Activated CD8-positive, alpha-beta T cell treated with anti-CD3 and anti-CD28 coated beads, Interleukin-2, amount 10 ng/mL, durations not matched to agents 7 days and 5 days (primary cell): ENCODE measurements at regions of chr1 and their contacts with region 1.

Region 1: DNA sequence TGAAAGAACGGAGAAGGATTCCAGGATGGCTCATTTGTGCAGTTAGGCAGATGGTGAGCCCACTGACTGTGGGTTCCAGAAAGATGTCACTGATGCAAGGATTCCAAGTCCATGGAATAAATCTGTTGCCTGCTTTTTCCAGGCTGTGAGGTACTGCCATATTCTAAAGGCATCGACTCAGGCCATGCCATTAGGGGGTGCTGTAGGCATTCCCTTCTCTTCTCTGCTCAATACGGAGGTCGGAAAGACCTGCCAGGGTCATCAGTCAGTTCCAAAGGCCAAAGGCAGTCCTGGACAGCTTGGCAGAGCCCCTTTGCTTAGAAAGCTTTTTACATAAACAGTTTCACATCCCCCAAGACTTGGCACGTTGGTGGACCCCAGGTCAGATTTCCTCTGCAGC is 31.7 kb upstream of the TMEM125 start:
- DNase-seq: peak; percentile 63
- ATAC-seq: no peak
- H3K4me3 Mint-ChIP-seq: no peak overlapping the region
- H3K27ac Mint-ChIP-seq: no peak overlapping the region
- H3K4me1 Mint-ChIP-seq: peaks cover 10% of the 10 kb centered on the region
- H3K27me3 Mint-ChIP-seq: peaks cover 4% of the 10 kb centered on the region

Region 2: GRCh38 chr1:43073490-43074230 is 164.4 kb before region 1 on chr1:
- CTCF ChIA-PET with region 1: no interaction called
- POLR2A ChIA-PET with region 1: no interaction called
- DNase-seq: peak; percentile 82
- ATAC-seq: peak; percentile 86
- H3K4me3 Mint-ChIP-seq: no peak overlapping the region
- H3K27ac Mint-ChIP-seq: peak overlapping the region; percentile 17
- H3K4me1 Mint-ChIP-seq: peaks cover 6% of the 10 kb centered on the region
- H3K27me3 Mint-ChIP-seq: peaks cover 2% of the 10 kb centered on the region

Region 3: GRCh38 chr1:43147553-43148319 is 90.3 kb before region 1 on chr1:
- CTCF ChIA-PET with region 1: no interaction called
- POLR2A ChIA-PET with region 1: no interaction called
- DNase-seq: peak; percentile 44
- ATAC-seq: peak; percentile 78
- H3K4me3 Mint-ChIP-seq: no peak overlapping the region
- H3K27ac Mint-ChIP-seq: no peak overlapping the region
- H3K4me1 Mint-ChIP-seq: peaks cover 2% of the 10 kb centered on the region
- H3K27me3 Mint-ChIP-seq: peaks cover 55% of the 10 kb centered on the region

Region 4: DNA sequence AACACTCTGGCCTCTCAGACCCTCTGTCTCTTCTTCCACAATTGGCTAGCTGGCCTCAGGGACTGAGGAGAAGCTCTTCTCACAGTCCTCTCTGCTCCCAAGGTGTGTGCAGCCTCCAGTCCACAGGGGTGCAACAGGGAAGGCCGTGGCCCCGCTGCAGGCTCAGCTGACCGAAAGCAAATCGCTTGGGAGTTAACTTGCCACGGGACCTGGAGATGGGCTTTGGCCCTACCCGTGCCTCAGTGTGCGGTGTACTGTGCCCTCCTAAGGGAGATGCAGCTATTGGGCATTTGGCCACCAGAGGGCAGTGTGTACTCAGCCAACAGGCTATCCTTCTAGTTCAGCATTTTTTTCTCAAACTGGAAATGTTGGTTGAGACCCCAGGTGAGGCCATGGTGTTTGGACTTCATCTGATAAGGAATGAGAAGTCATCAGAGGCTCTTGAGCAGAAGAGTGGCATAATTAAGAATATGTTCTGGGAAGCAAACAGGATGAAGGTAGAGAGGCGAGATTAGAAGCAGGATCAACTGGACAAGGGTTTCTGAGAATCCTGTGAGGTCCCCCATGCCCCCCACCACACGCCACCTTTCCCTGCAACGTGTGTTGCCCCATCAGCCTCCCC is 10.8 kb before region 1 on chr1:
- CTCF ChIA-PET with region 1: interaction called, 13 read pairs
- POLR2A ChIA-PET with region 1: no interaction called
- DNase-seq: peak; percentile 90
- ATAC-seq: peak; percentile 87
- H3K4me3 Mint-ChIP-seq: no peak overlapping the region
- H3K27ac Mint-ChIP-seq: no peak overlapping the region
- H3K4me1 Mint-ChIP-seq: no peaks in the 10 kb centered on the region
- H3K27me3 Mint-ChIP-seq: peaks cover 2% of the 10 kb centered on the region

Region 5: DNA sequence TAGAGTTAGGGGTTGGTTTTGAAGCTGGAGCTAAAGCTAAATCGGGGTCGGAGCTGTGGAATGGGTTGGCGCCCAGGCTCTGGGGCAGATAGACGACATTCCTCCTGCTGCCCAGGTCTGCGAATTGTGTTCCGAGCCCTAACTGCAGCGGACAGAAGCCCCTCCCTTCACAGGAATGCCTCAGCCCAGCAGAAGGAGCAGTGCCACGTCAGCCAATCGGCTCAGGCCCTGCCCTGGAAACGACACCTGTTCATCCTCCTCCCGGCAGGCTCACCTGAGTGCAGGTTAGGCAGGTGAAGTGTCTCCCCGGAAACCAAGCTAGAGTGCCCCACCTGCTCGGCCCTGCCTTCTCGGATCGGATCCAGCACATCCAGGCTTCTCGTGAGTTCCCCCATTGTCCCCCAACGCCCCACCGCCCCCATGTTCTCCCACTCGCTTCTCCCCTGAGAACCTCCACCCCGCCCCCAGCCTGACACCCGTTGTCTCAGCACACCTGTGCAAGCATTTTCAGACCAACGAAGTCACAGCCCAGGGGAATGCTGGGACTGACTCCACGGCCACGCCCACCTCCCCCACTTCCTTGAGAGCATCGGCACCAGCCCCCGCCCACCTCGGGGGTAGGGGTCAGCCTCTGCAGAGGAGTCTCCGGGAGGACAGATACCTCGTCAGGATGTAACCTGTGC is 32.5 kb after region 1 on chr1:
- CTCF ChIA-PET with region 1: no interaction called
- POLR2A ChIA-PET with region 1: no interaction called
- DNase-seq: no peak
- ATAC-seq: no peak
- H3K4me3 Mint-ChIP-seq: no peak overlapping the region
- H3K27ac Mint-ChIP-seq: no peak overlapping the region
- H3K4me1 Mint-ChIP-seq: peaks cover 25% of the 10 kb centered on the region
- H3K27me3 Mint-ChIP-seq: peaks cover 11% of the 10 kb centered on the region

Region 6: GRCh38 chr1:43358746-43359693 is 120.9 kb after region 1 on chr1 and contains the start of gene CDC20:
- CTCF ChIA-PET with region 1: interaction called, 15 read pairs
- POLR2A ChIA-PET with region 1: interaction called, 7 read pairs
- DNase-seq: peak; percentile 100
- ATAC-seq: peak; percentile 99
- H3K4me3 Mint-ChIP-seq: peak within 1 kb of the TSS; percentile 95
- H3K27ac Mint-ChIP-seq: peak within 1 kb of the TSS; percentile 92
- H3K4me1 Mint-ChIP-seq: peaks cover 54% of the 10 kb centered on the region
- H3K27me3 Mint-ChIP-seq: no peaks in the 10 kb centered on the region
- total RNA-seq, gene CDC20: 214 to 232 TPM